Activated naive CD8-positive, alpha-beta T cell treated with anti-CD3 and anti-CD28 coated beads, Interleukin-2, amount 10 ng/mL, durations not matched to agents 7 days and 5 days (primary cell): ENCODE measurements at regions of chr13 and their contacts with region 1.

Region 1: DNA sequence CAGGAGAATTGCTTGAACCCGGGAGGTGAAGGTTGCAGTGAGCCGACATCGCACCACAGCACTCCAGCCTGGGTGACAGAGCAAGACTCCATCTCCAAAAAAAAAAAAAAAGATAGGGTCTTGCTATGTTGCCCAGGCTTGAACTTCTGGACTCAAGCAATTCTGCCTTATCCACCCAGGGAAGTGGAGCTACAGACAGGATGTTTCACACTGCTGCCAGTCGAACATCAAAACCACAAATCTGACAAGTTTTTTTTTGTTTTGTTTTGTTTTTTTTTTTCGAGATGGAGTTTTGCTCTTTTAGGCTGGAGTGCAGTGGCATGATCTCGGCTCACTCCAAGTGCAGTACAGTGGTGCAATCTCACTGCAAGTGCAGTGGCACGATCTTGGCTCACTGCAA is 10.8 kb downstream of the XPO4 start:
- DNase-seq: no peak
- ATAC-seq: peak; percentile 73
- H3K4me3 Mint-ChIP-seq: no peak overlapping the region
- H3K27ac Mint-ChIP-seq: peak overlapping the region; percentile 81
- H3K4me1 Mint-ChIP-seq: peaks cover 14% of the 10 kb centered on the region
- H3K27me3 Mint-ChIP-seq: no peaks in the 10 kb centered on the region

Region 2: GRCh38 chr13:20782116-20782708 is 109.6 kb before region 1 on chr13:
- POLR2A ChIA-PET with region 1: no interaction called
- DNase-seq: no peak
- ATAC-seq: no peak
- H3K4me3 Mint-ChIP-seq: no peak overlapping the region
- H3K27ac Mint-ChIP-seq: no peak overlapping the region
- H3K4me1 Mint-ChIP-seq: peaks cover 4% of the 10 kb centered on the region
- H3K27me3 Mint-ChIP-seq: no peaks in the 10 kb centered on the region

Region 3: DNA sequence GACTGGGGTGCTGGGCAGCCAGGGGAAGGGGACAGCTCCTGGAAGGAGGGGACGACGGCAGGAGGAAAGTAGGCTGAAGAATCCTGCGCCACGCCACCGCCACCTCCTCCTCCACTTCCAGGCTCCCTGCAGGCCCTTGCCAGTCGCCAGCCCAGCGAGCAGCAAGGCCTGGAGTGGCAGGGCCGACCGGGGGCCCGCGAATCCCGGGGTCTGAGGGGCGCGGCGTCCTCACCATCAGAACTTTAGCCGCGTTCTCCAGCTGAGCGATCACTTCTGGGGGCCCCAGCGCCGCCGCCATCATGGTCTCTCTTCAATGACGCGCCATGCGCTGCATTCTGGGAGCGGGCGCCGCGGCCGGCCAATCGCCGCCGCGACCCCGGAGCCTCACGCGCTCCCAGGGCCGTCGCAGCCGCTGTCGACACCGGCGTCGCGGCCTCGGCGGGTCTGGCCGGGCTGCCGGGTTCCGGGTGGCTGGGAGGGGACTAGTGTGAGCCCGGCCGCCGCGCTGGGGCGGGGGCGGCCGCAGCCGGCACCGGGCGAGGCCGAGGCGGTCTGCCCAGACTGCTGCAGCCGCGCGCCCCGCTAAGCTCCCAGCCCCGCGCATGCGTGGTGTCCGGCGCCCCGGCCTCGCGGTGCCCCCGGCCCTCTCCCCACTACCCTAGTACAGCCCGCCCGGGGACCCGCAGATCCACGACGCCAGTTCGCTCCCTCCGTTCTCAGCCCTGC is 10.8 kb after region 1 on chr13 and contains the start of gene XPO4:
- POLR2A ChIA-PET with region 1: interaction called, 21 read pairs
- DNase-seq: peak; percentile 91
- ATAC-seq: peak; percentile 96
- H3K4me3 Mint-ChIP-seq: peak within 1 kb of the TSS; percentile 96
- H3K27ac Mint-ChIP-seq: peak within 1 kb of the TSS; percentile 98
- H3K4me1 Mint-ChIP-seq: peaks cover 17% of the 10 kb centered on the region
- H3K27me3 Mint-ChIP-seq: no peaks in the 10 kb centered on the region
- total RNA-seq, gene XPO4: 18.9 to 20.9 TPM